HepG2 (cell line): ENCODE measurements at regions of chr6 and their contacts with region 1.

Region 1: DNA sequence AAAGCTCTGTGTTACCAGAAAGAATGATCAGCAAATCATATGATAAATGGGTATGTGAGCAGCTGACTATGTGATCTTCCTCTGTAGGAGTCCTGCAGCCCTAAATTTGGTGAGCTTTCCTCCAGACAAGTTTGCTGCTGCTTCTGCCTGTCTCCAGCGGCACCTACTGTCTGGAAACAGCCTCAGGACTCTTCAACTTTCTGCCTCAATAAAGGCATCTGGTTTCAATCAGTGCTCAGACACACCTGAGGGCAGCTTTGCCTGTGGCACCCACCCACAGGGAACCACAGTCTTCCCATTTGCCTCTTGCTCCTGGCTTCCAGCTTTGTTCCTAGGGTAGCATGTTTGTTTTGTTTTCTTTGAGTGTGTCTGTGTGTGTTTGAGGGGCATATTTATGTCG is 727.9 kb upstream of the MAN1A1 start:
- DNase-seq: no peak
- ATAC-seq: no peak
- H3K4me3 ChIP-seq: no peak overlapping the region
- H3K27ac ChIP-seq: no peak overlapping the region
- H3K4me1 ChIP-seq: no peaks in the 10 kb centered on the region
- H3K27me3 ChIP-seq: no peaks in the 10 kb centered on the region
- CTCF ChIP-seq: peak; percentile 16; the same call in 1 of the 2 replicates
- EP300 ChIP-seq: no peak
- POLR2A ChIP-seq: no peak
- RAD21 ChIP-seq: no peak

Region 2: GRCh38 chr6:120005292-120005976 is 72.1 kb before region 1 on chr6:
- CTCF ChIA-PET with region 1: no interaction called
- POLR2A ChIA-PET with region 1: no interaction called
- in situ Hi-C with region 1: no loop called
- intact Hi-C with region 1: no loop called
- DNase-seq: peak; percentile 92
- ATAC-seq: peak; percentile 98
- H3K4me3 ChIP-seq: peak overlapping the region; percentile 70 to 98 (median 74)
- H3K27ac ChIP-seq: peak overlapping the region; percentile 39
- H3K4me1 ChIP-seq: peaks cover 17% of the 10 kb centered on the region
- H3K27me3 ChIP-seq: no peaks in the 10 kb centered on the region; a peak in 1 of 5 replicates
- CTCF ChIP-seq: no peak
- EP300 ChIP-seq: no peak
- POLR2A ChIP-seq: peak; percentile 82 to 96
- RAD21 ChIP-seq: no peak

Region 3: GRCh38 chr6:120056085-120056484 is 21.4 kb before region 1 on chr6:
- CTCF ChIA-PET with region 1: no interaction called
- POLR2A ChIA-PET with region 1: no interaction called
- in situ Hi-C with region 1: no loop called
- intact Hi-C with region 1: loop called (anchors 1 kb)
- DNase-seq: no peak
- ATAC-seq: no peak; the same call in 2 of the 3 replicates
- H3K4me3 ChIP-seq: no peak overlapping the region
- H3K27ac ChIP-seq: no peak overlapping the region
- H3K4me1 ChIP-seq: no peaks in the 10 kb centered on the region
- H3K27me3 ChIP-seq: no peaks in the 10 kb centered on the region
- CTCF ChIP-seq: peak; percentile 39
- EP300 ChIP-seq: no peak
- POLR2A ChIP-seq: no peak
- RAD21 ChIP-seq: no peak

Region 4: DNA sequence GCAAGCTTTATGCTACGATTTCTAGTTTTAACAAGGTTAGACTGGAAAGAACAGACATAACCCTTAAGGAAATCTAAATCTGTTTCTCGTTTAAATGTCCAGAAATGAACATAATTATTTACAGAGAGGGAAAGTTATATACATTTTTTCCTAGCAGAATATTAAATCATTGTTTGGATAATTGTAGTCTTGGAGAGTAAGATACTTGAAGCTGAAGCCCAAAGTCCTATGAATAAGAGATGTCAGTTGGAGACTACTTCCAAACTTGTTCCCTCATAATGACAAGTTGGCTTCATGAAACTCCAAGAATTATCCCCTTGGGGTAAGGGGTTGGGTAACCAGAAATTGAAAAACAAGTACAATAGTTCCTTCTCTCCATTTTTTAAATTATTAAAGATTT is 183.1 kb after region 1 on chr6:
- CTCF ChIA-PET with region 1: no interaction called
- POLR2A ChIA-PET with region 1: no interaction called
- in situ Hi-C with region 1: no loop called
- intact Hi-C with region 1: no loop called
- DNase-seq: no peak
- ATAC-seq: no peak
- H3K4me3 ChIP-seq: no peak overlapping the region
- H3K27ac ChIP-seq: no peak overlapping the region
- H3K4me1 ChIP-seq: no peaks in the 10 kb centered on the region
- H3K27me3 ChIP-seq: no peaks in the 10 kb centered on the region
- CTCF ChIP-seq: no peak
- EP300 ChIP-seq: no peak
- POLR2A ChIP-seq: no peak
- RAD21 ChIP-seq: no peak